Activated T-helper 2 cell treated with anti-CD3 and anti-CD28 coated beads, Interferon-gamma antibody, Interleukin-2, Interleukin-4, amounts not matched to agents 10 μg/mL and 5 μg/mL and 100 μg/mL, durations not matched to agents 14 hours and 24 hours and 36 hours (primary cell): ENCODE measurements at regions of chr6 and their contacts with region 1.

Region 1: DNA sequence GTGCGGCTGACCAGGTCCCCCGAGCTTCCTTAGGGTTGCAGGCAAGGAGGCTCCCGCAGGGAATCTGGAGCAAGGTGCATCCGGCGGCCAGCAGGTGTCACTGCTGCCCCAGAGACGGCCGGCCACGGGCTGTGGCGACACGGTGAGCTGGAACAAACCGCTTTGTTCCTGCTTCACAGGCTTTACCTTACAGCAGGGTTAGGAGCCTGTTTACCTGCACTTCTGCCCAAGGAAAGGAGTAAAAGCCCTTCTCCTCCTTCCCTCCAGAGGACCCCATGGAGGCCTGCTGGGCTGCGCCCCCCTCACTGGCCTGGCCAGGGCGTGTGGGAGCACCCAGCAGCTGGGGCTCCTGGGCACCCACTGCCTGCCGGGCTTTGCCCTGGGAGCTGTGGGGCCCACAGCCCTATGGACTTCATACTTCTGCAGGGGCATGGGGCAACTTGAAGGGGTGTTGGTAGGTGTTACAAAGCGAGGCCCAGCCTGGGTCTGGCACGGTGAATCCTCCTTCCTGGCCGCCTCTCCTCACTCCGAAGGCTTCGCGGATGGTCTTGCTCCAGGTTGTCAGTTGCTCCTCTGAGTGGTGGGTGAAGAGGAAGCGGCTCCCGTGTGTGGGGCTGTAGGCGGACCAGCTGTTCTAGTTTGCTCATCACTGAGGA is 88.4 kb downstream of the CDC5L start:
- DNase-seq: peak; percentile 61
- H3K4me3 Mint-ChIP-seq: no peak overlapping the region
- H3K27ac Mint-ChIP-seq: no peak overlapping the region
- H3K4me1 Mint-ChIP-seq: no peaks in the 10 kb centered on the region
- H3K27me3 Mint-ChIP-seq: peaks cover 17% of the 10 kb centered on the region

Region 2: GRCh38 chr6:44593539-44593944 is 117.6 kb after region 1 on chr6:
- intact Hi-C with region 1: loop called (anchors 10 kb)
- DNase-seq: peak; percentile 49
- H3K4me3 Mint-ChIP-seq: no peak overlapping the region
- H3K27ac Mint-ChIP-seq: no peak overlapping the region
- H3K4me1 Mint-ChIP-seq: peaks cover 6% of the 10 kb centered on the region
- H3K27me3 Mint-ChIP-seq: peaks cover 16% of the 10 kb centered on the region

Region 3: GRCh38 chr6:44627091-44627878 is 151.4 kb after region 1 on chr6:
- intact Hi-C with region 1: loop called (anchors 10 kb)
- DNase-seq: peak; percentile 11
- H3K4me3 Mint-ChIP-seq: no peak overlapping the region
- H3K27ac Mint-ChIP-seq: peak overlapping the region; percentile 73
- H3K4me1 Mint-ChIP-seq: peaks cover 26% of the 10 kb centered on the region
- H3K27me3 Mint-ChIP-seq: no peaks in the 10 kb centered on the region